GM12878 (cell line): ENCODE measurements at regions of chr6 and their contacts with region 1.

Region 1: GRCh38 chr6:110528101-110528929 is 51.9 kb upstream of the SLC22A16 start:
- DNase-seq: peak; percentile 28
- ATAC-seq: peak; percentile 89
- H3K4me3 ChIP-seq: no peak overlapping the region
- H3K27ac ChIP-seq: no peak overlapping the region
- H3K4me1 ChIP-seq: no peaks in the 10 kb centered on the region
- H3K27me3 ChIP-seq: peaks cover 0 to 1% of the 10 kb centered on the region in 2 experiments; a peak in 2 of 4 replicates
- CTCF ChIP-seq: peak; percentile 47 to 88 (median 73); a peak in 5 of 6 replicates
- EP300 ChIP-seq: no peak
- POLR2A ChIP-seq: no peak
- RAD21 ChIP-seq: peak; percentile 93

Region 2: DNA sequence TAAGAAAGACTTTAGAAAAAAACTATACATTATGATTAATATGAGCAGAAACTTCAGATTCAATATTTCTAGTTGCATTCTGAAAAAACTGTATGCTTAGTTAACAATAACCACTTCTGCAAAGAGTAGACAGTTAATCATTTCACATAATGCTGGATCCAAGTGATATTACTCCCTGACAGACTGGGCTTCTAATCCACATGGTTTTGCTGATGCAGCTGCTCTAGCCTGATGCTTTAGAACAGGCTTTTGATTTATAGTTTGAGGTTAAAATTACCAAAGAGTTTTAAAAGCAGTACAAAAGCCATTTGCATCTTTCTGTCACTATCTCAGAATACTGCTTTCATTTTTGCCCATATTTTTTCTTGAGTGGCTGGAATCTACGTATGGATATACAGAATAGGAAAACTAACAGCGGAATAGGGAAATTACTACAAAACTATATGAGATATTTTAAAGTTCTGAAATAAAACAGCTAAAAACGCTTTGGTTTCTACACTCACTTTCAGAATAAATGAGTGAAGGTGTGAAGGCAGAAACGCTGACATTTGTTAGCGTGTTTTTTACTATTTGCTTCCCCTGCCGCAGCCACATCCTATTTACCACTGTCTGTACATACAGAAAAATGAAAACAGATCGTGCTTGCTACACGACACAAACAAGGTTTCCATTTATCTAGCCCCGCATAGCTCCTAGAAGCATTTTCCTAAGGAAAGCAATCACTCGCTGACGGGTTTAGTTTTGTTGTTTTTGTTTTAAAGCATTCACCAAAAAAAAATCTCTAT is 231.9 kb before region 1 on chr6:
- CTCF ChIA-PET with region 1: no interaction called
- POLR2A ChIA-PET with region 1: no interaction called
- RAD21 ChIA-PET with region 1: no interaction called
- SMC1A ChIA-PET with region 1: no interaction called
- in situ Hi-C with region 1: no loop called
- intact Hi-C with region 1: no loop called
- DNase-seq: no peak
- ATAC-seq: no peak
- H3K4me3 ChIP-seq: no peak overlapping the region
- H3K27ac ChIP-seq: no peak overlapping the region
- H3K4me1 ChIP-seq: no peaks in the 10 kb centered on the region
- H3K27me3 ChIP-seq: no peaks in the 10 kb centered on the region; a peak in 1 of 4 replicates
- CTCF ChIP-seq: no peak
- EP300 ChIP-seq: no peak
- POLR2A ChIP-seq: no peak
- RAD21 ChIP-seq: no peak

Region 3: GRCh38 chr6:110398778-110399177 is 129.5 kb before region 1 on chr6:
- CTCF ChIA-PET with region 1: no interaction called
- POLR2A ChIA-PET with region 1: no interaction called
- RAD21 ChIA-PET with region 1: no interaction called
- SMC1A ChIA-PET with region 1: no interaction called
- in situ Hi-C with region 1: no loop called
- intact Hi-C with region 1: no loop called
- DNase-seq: no peak
- ATAC-seq: no peak
- H3K4me3 ChIP-seq: no peak overlapping the region
- H3K27ac ChIP-seq: no peak overlapping the region
- H3K4me1 ChIP-seq: no peaks in the 10 kb centered on the region
- H3K27me3 ChIP-seq: peaks cover 0 to 4% of the 10 kb centered on the region in 2 experiments; a peak in 2 of 4 replicates
- CTCF ChIP-seq: no peak
- EP300 ChIP-seq: no peak
- POLR2A ChIP-seq: no peak
- RAD21 ChIP-seq: no peak

Region 4: DNA sequence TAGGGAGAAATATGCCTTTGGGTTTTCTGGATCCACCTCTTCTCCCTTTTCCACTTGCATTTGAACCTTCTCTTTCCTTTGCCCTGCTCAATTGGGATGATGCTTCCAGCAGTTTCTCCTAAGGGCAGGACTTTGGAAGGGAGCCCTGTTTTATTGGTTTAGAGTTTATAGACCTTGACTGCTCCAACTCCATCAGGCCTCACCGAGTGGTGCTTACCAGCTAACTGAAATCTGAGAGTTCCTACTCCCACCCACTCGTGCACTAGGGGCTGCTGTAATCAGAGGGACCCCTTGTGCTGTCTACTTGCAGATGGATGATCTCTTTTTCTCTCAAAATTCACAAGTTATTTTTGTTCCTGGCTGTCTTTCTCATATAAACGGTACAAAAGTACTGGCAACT is 69.4 kb after region 1 on chr6:
- CTCF ChIA-PET with region 1: no interaction called
- POLR2A ChIA-PET with region 1: no interaction called
- RAD21 ChIA-PET with region 1: no interaction called
- SMC1A ChIA-PET with region 1: no interaction called
- in situ Hi-C with region 1: no loop called
- intact Hi-C with region 1: no loop called
- DNase-seq: no peak
- ATAC-seq: no peak
- H3K4me3 ChIP-seq: no peak overlapping the region
- H3K27ac ChIP-seq: no peak overlapping the region
- H3K4me1 ChIP-seq: no peaks in the 10 kb centered on the region
- H3K27me3 ChIP-seq: no peaks in the 10 kb centered on the region
- CTCF ChIP-seq: no peak
- EP300 ChIP-seq: no peak
- POLR2A ChIP-seq: no peak
- RAD21 ChIP-seq: no peak

Region 5: DNA sequence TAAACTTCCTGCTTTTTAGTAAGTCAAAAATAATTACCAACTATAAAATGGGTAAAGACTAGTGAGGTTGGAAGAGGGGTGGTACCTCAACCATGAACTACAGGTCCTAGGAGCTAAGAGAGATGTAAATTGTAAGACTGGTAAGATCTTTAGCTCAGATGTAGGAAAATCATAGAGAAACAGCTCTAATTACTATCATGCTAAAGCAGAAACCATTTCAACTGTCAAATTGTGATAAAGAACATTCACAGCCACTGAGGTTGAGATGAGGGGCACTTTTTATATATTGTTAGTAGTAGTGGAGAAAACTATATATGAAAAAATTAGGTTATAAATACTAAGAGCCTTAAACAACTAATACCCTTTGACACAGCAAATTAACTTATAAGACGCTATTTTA is 267.0 kb after region 1 on chr6:
- CTCF ChIA-PET with region 1: no interaction called
- POLR2A ChIA-PET with region 1: no interaction called
- RAD21 ChIA-PET with region 1: no interaction called
- SMC1A ChIA-PET with region 1: no interaction called
- in situ Hi-C with region 1: no loop called
- intact Hi-C with region 1: no loop called
- DNase-seq: no peak
- ATAC-seq: no peak
- H3K4me3 ChIP-seq: no peak overlapping the region
- H3K27ac ChIP-seq: no peak overlapping the region
- H3K4me1 ChIP-seq: no peaks in the 10 kb centered on the region
- H3K27me3 ChIP-seq: no peaks in the 10 kb centered on the region
- CTCF ChIP-seq: no peak
- EP300 ChIP-seq: no peak
- POLR2A ChIP-seq: no peak
- RAD21 ChIP-seq: no peak

Region 6: DNA sequence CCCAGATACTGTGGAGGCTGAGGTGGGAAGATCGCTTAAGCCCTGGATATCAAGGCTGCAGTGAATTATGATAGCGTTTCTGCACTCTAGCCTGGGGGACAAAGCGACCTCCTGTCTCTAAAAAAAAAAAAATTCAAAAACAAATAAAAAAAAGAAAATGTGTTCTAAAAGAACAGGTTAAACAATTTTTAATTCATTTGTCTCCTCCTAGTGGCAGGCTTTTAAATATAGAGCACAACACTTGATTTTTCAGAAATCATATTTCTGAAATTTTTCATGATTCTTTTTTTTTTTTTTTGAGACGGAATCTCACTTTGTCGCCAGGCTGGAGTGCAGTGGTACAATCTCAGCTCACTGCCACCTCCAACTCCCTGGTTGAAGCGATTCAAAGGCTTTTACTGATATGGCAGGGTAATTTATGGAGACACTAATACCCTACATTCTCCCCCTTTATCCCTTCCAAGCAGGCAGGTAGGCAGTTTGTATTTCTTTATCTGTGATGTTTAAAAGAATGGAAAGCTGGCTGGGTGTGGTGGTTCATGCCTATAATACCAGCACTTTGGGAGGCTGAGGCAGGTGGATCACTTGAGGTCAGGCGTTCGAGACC is 421.5 kb after region 1 on chr6:
- CTCF ChIA-PET with region 1: interaction called, 28 read pairs
- POLR2A ChIA-PET with region 1: no interaction called
- RAD21 ChIA-PET with region 1: interaction called, 5 read pairs
- SMC1A ChIA-PET with region 1: interaction called, 13 read pairs
- in situ Hi-C with region 1: loop called (anchors 5 kb)
- intact Hi-C with region 1: loop called (anchors 1 kb)
- DNase-seq: no peak
- ATAC-seq: no peak
- H3K4me3 ChIP-seq: no peak overlapping the region
- H3K27ac ChIP-seq: no peak overlapping the region
- H3K4me1 ChIP-seq: peaks cover 6% of the 10 kb centered on the region
- H3K27me3 ChIP-seq: no peaks in the 10 kb centered on the region
- CTCF ChIP-seq: peak; percentile 27 to 58 (median 51); a peak in 4 of 6 replicates
- EP300 ChIP-seq: no peak
- POLR2A ChIP-seq: no peak
- RAD21 ChIP-seq: peak; percentile 64

Region 7: GRCh38 chr6:110999634-111000270 is 471.4 kb after region 1 on chr6:
- CTCF ChIA-PET with region 1: interaction called, 4 read pairs
- POLR2A ChIA-PET with region 1: no interaction called
- RAD21 ChIA-PET with region 1: no interaction called
- SMC1A ChIA-PET with region 1: no interaction called
- in situ Hi-C with region 1: no loop called
- intact Hi-C with region 1: loop called (anchors 2 kb)
- DNase-seq: no peak
- ATAC-seq: peak; percentile 52
- H3K4me3 ChIP-seq: no peak overlapping the region
- H3K27ac ChIP-seq: no peak overlapping the region
- H3K4me1 ChIP-seq: no peaks in the 10 kb centered on the region
- H3K27me3 ChIP-seq: no peaks in the 10 kb centered on the region
- CTCF ChIP-seq: peak in 2 of 3 experiments; percentile 13 to 26; a peak in 2 of 6 replicates
- EP300 ChIP-seq: no peak
- POLR2A ChIP-seq: no peak
- RAD21 ChIP-seq: peak; percentile 55